MCF 10A (cell line): ENCODE measurements at regions of chr5 and their contacts with region 1.

Region 1: GRCh38 chr5:38193015-38193581 is 65.3 kb upstream of the EGFLAM start:
- DNase-seq: peak; percentile 69
- H3K4me3 Mint-ChIP-seq: no peak overlapping the region
- H3K27ac Mint-ChIP-seq: no peak overlapping the region
- H3K4me1 Mint-ChIP-seq: no peaks in the 10 kb centered on the region
- H3K27me3 Mint-ChIP-seq: peaks cover 21% of the 10 kb centered on the region
- CTCF ChIP-seq: peak; percentile 93

Region 2: GRCh38 chr5:37412515-37413277 is 780.4 kb before region 1 on chr5:
- CTCF ChIA-PET with region 1: interaction called, 36 read pairs
- POLR2A ChIA-PET with region 1: no interaction called
- intact Hi-C with region 1: loop called (anchors 1 kb)
- DNase-seq: peak; percentile 89
- H3K4me3 Mint-ChIP-seq: no peak overlapping the region
- H3K27ac Mint-ChIP-seq: no peak overlapping the region
- H3K4me1 Mint-ChIP-seq: no peaks in the 10 kb centered on the region
- H3K27me3 Mint-ChIP-seq: no peaks in the 10 kb centered on the region
- CTCF ChIP-seq: peak; percentile 92

Region 3: DNA sequence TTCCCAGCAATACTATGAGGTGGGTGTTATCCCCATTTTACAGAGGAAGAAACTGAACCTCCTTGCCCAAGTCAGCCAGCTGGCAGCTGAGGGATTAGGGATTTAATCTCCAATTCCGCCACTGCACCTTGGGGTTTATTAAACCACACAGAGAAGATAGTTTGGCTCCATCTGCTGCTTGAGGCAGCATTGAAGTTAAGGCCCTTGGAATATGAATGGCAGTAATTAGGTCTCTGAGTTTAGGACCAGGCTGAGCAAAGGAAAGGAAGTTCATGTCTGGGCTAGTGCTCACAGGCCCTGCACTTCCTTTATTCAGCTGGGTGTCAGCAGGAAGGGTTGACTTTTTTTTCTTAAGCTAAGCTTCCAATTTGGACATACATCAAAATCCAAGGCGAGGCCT is 266.4 kb before region 1 on chr5:
- CTCF ChIA-PET with region 1: interaction called, 3 read pairs
- POLR2A ChIA-PET with region 1: no interaction called
- intact Hi-C with region 1: loop called (anchors 5 kb)
- DNase-seq: peak; percentile 14
- H3K4me3 Mint-ChIP-seq: no peak overlapping the region
- H3K27ac Mint-ChIP-seq: no peak overlapping the region
- H3K4me1 Mint-ChIP-seq: no peaks in the 10 kb centered on the region
- H3K27me3 Mint-ChIP-seq: no peaks in the 10 kb centered on the region
- CTCF ChIP-seq: no peak

Region 4: GRCh38 chr5:38023799-38024198 is 169.3 kb before region 1 on chr5:
- CTCF ChIA-PET with region 1: interaction called, 8 read pairs
- POLR2A ChIA-PET with region 1: no interaction called
- intact Hi-C with region 1: loop called (anchors 1 kb)
- DNase-seq: no peak
- H3K4me3 Mint-ChIP-seq: no peak overlapping the region
- H3K27ac Mint-ChIP-seq: no peak overlapping the region
- H3K4me1 Mint-ChIP-seq: no peaks in the 10 kb centered on the region
- H3K27me3 Mint-ChIP-seq: no peaks in the 10 kb centered on the region
- CTCF ChIP-seq: no peak

Region 5: GRCh38 chr5:38182991-38183390 is 10.1 kb before region 1 on chr5:
- CTCF ChIA-PET with region 1: interaction called, 14 read pairs
- POLR2A ChIA-PET with region 1: interaction called, 3 read pairs
- intact Hi-C with region 1: no loop called
- DNase-seq: no peak
- H3K4me3 Mint-ChIP-seq: no peak overlapping the region
- H3K27ac Mint-ChIP-seq: no peak overlapping the region
- H3K4me1 Mint-ChIP-seq: no peaks in the 10 kb centered on the region
- H3K27me3 Mint-ChIP-seq: no peaks in the 10 kb centered on the region
- CTCF ChIP-seq: no peak

Region 6: DNA sequence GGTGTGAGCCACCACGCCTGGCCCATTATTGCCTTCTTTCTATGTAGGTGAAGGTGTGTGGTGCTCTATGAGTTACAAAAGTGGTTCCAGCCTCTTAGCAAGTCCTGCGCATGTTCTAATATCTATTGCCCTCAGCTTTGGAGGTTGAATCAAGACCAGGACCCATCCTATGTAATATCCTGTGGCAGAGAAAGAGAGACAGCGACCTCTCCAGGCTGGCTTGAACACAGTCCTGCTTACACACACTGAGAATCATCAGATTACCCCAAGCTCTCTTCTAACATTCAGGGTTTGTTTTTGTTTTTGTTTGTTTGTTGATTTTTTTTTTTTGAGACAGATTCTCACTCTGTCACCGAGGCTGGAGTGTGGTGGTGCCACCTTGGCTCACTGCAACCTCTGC is 558.0 kb after region 1 on chr5:
- CTCF ChIA-PET with region 1: no interaction called
- POLR2A ChIA-PET with region 1: no interaction called
- intact Hi-C with region 1: no loop called
- DNase-seq: peak; percentile 18
- H3K4me3 Mint-ChIP-seq: no peak overlapping the region
- H3K27ac Mint-ChIP-seq: peak overlapping the region; percentile 33
- H3K4me1 Mint-ChIP-seq: peaks cover 7% of the 10 kb centered on the region
- H3K27me3 Mint-ChIP-seq: no peaks in the 10 kb centered on the region
- CTCF ChIP-seq: peak; percentile 9